ENCODE measurements at regions of chr11 and their contacts with region 1.

Region 1: GRCh38 chr11:95299078-95299679 is 68.2 kb upstream of the SESN3 start:
- DNase-seq: peak; percentile 47 to 57
- H3K4me3 ChIP-seq: no peak overlapping the region
- H3K4me3 Mint-ChIP-seq: no peak overlapping the region
- H3K27ac Mint-ChIP-seq: no peak overlapping the region
- H3K4me1 ChIP-seq: peaks cover 30% of the 10 kb centered on the region
- H3K4me1 Mint-ChIP-seq: peaks cover 21% of the 10 kb centered on the region
- H3K27me3 ChIP-seq: no peaks in the 10 kb centered on the region
- H3K27me3 Mint-ChIP-seq: no peaks in the 10 kb centered on the region
- CTCF ChIP-seq: no peak

Region 2: GRCh38 chr11:95068549-95068948 is 230.6 kb before region 1 on chr11:
- CTCF ChIA-PET with region 1: no interaction called
- POLR2A ChIA-PET with region 1: no interaction called
- intact Hi-C with region 1: no loop called
- DNase-seq: peak; percentile 89 to 92
- H3K4me3 ChIP-seq: peak overlapping the region; percentile 46
- H3K4me3 Mint-ChIP-seq: peak overlapping the region; percentile 100
- H3K27ac Mint-ChIP-seq: peak overlapping the region; percentile 99
- H3K4me1 ChIP-seq: peaks cover 12% of the 10 kb centered on the region
- H3K4me1 Mint-ChIP-seq: peaks cover 15% of the 10 kb centered on the region
- H3K27me3 ChIP-seq: no peaks in the 10 kb centered on the region
- H3K27me3 Mint-ChIP-seq: peaks cover 2% of the 10 kb centered on the region
- CTCF ChIP-seq: no peak

Region 3: GRCh38 chr11:95241681-95242081 is 57.5 kb before region 1 on chr11:
- CTCF ChIA-PET with region 1: no interaction called
- POLR2A ChIA-PET with region 1: no interaction called
- intact Hi-C with region 1: loop called (anchors 2 kb)
- DNase-seq: no peak
- H3K4me3 ChIP-seq: no peak overlapping the region
- H3K4me3 Mint-ChIP-seq: no peak overlapping the region
- H3K27ac Mint-ChIP-seq: peak overlapping the region; percentile 72
- H3K4me1 ChIP-seq: peaks cover 45% of the 10 kb centered on the region
- H3K4me1 Mint-ChIP-seq: peaks cover 31% of the 10 kb centered on the region
- H3K27me3 ChIP-seq: no peaks in the 10 kb centered on the region
- H3K27me3 Mint-ChIP-seq: no peaks in the 10 kb centered on the region
- CTCF ChIP-seq: no peak

Region 4: GRCh38 chr11:95891423-95892177 is 592.4 kb after region 1 on chr11:
- CTCF ChIA-PET with region 1: no interaction called
- POLR2A ChIA-PET with region 1: no interaction called
- intact Hi-C with region 1: no loop called
- DNase-seq: no peak
- H3K4me3 ChIP-seq: no peak overlapping the region
- H3K4me3 Mint-ChIP-seq: no peak overlapping the region
- H3K27ac Mint-ChIP-seq: no peak overlapping the region
- H3K4me1 ChIP-seq: peaks cover 34% of the 10 kb centered on the region
- H3K4me1 Mint-ChIP-seq: peaks cover 12% of the 10 kb centered on the region
- H3K27me3 ChIP-seq: no peaks in the 10 kb centered on the region
- H3K27me3 Mint-ChIP-seq: no peaks in the 10 kb centered on the region
- CTCF ChIP-seq: no peak

Measured in Caco-2 (cell line).